ENCODE measurements at regions of chr11 and their contacts with region 1.

Region 1: GRCh38 chr11:6603287-6604080 is at the starts of genes ILK and RRP8:
- DNase-seq: peak; percentile 96
- H3K4me3 Mint-ChIP-seq: no peak within 1 kb of the TSS
- H3K27ac Mint-ChIP-seq: no peak within 1 kb of the TSS
- H3K4me1 Mint-ChIP-seq: peaks cover 28% of the 10 kb centered on the region
- H3K27me3 Mint-ChIP-seq: no peaks in the 10 kb centered on the region
- total RNA-seq, gene ILK: 89.6 and 92.4 TPM in 2 replicates
- total RNA-seq, gene RRP8: 41.5 and 43.8 TPM in 2 replicates

Region 2: GRCh38 chr11:6234387-6235107 is 368.9 kb before region 1 on chr11 and contains the start of gene FHIP1B:
- intact Hi-C with region 1: loop called (anchors 2 kb)
- DNase-seq: peak; percentile 100
- H3K4me3 Mint-ChIP-seq: peak within 1 kb of the TSS; percentile 95
- H3K27ac Mint-ChIP-seq: peak within 1 kb of the TSS; percentile 90
- H3K4me1 Mint-ChIP-seq: peaks cover 35% of the 10 kb centered on the region
- H3K27me3 Mint-ChIP-seq: peaks cover 1% of the 10 kb centered on the region
- total RNA-seq, gene FHIP1B: 19.3 and 20.2 TPM in 2 replicates

Region 3: GRCh38 chr11:6377902-6378639 is 225.4 kb before region 1 on chr11:
- intact Hi-C with region 1: loop called (anchors 1 kb)
- DNase-seq: peak; percentile 66
- H3K4me3 Mint-ChIP-seq: peak overlapping the region; percentile 2
- H3K27ac Mint-ChIP-seq: peak overlapping the region; percentile 10
- H3K4me1 Mint-ChIP-seq: peaks cover 29% of the 10 kb centered on the region
- H3K27me3 Mint-ChIP-seq: no peaks in the 10 kb centered on the region

Region 4: DNA sequence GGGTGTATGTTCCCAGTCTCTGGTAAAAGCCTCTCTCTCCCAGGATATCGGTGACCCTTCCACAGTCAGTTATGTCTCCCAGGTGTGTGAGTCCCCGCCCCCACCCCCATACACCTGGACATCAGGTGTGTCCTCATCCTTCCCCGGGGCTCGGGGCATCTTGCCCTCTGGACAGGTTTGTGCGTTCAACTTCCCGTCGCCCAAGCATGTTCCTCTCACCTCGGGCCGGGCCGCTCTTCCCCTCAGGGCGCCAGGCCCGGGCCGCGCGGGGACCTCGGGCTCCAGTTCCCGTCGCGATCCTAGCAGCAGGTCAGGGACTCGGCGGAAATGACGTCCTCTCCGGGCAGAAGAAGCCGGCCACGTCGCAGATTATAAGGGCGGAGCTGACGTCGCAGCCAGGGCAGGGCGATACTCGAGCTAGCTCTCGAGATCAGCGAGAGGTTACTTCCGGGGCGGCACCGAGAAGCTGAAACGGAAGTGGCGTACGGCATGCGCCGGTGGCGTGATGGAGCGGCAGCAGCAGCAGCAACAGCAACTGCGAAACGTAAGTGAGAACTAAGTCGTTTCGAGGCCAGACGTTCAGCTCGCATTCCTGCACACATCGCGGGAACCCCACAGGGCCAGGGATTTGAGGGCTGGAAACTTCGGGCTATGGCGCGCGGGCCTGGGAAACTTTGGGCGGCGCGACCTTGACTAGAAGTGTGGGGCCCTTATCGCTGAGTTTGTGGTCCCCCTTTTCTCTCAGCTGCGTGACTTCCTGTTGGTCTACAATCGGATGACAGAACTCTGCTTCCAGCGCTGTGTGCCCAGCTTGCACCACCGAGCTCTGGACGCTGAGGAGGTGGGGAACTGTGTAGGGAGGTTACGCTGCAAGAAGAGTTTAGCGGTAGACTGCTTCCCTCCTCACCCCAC is 122.2 kb before region 1 on chr11 and contains the starts of genes ARFIP2 and TIMM10B:
- intact Hi-C with region 1: loop called (anchors 1 kb)
- DNase-seq: peak; percentile 99
- H3K4me3 Mint-ChIP-seq: peak within 1 kb of the TSS; percentile 94
- H3K27ac Mint-ChIP-seq: peak within 1 kb of the TSS; percentile 98
- H3K4me1 Mint-ChIP-seq: peaks cover 30% of the 10 kb centered on the region
- H3K27me3 Mint-ChIP-seq: no peaks in the 10 kb centered on the region
- total RNA-seq, gene ARFIP2: 50.8 and 51.2 TPM in 2 replicates
- total RNA-seq, gene TIMM10B: 41.3 and 47.4 TPM in 2 replicates

Region 5: DNA sequence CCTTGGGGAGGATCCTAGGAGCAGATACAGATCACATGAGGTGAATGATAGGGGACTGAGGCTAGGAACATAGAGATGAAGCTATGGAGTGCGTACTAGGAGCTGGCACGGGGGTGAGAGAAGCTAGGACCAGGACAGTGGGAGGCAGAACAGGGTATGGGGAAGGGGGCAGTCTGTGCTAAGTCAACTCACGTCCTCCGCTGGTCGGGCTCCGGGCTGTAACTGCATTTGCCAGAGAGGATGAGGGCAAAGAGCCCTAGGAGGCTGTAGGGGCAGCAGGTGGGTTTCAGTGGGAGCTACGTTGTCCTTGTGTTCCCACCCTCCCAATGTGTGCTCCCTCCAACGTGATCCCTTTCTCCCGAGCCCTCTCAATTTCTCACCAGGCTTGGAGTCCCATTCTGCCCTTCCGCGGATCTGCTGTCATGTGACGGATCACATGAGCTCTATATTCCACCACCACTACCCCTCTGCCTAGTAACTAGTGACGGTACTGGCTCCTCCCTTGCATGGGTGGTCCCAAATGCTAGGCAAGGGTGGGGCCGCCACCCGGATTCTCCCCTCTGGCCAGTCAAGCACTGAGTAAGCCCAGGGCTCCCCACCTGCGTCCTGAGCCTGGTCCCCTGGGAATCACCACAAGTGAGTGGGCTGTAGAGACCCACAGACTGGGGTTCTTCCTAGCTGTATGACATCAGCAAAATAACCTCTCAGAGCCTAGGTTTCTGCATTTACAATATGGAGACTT is 15.7 kb after region 1 on chr11 and contains the start of gene TPP1:
- intact Hi-C with region 1: loop called (anchors 1 kb)
- DNase-seq: peak; percentile 98
- H3K4me3 Mint-ChIP-seq: no peak within 1 kb of the TSS
- H3K27ac Mint-ChIP-seq: no peak within 1 kb of the TSS
- H3K4me1 Mint-ChIP-seq: peaks cover 3% of the 10 kb centered on the region
- H3K27me3 Mint-ChIP-seq: no peaks in the 10 kb centered on the region
- total RNA-seq, gene TPP1: 32.2 and 35.2 TPM in 2 replicates

Region 6: DNA sequence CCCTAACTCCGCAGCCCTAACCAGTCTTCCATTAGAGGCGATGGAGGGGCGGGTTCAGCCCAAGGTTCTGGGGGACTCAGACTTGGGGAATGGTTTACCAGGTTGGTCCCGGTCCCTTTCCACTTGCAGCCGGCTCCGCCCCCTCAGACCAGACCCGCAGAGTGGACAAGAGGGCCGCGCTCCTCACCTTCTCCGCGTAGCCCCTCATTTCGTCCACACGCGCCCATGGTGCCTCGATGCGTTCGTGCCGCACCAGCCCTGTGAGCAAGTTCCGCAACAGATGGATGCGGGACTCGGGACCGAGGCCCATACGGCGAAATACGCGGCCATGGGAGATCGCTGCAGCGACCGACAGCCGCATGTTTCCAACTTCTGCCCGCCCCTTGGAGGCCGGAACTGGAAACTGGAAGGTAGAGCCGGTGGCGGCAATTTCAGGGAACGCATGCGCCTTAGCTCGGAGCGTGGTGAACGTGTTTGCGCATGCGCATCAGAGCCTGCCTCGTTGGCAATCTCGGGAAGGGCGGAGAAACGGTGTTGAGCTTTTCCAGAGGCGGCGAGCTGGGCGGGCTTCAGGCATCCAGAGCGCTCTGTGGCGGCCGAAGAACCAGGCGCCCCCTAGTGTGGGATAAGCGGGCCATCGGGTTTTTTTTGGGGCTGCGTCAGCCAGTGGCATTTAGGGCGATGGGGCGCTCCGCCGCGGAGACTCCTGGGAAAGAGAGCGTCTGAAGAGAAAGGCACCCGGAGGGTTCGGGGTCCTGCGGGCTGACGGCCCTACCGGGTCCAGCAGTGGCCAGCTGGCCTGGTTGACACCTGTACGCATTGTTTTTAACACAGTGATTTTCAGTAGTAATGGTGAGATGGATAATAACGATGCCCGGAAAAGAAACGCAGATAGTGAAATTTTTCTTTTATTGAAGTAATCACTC is 79.7 kb after region 1 on chr11 and contains the start of gene MRPL17:
- intact Hi-C with region 1: loop called (anchors 1 kb)
- DNase-seq: peak; percentile 100
- H3K4me3 Mint-ChIP-seq: peak within 1 kb of the TSS; percentile 86
- H3K27ac Mint-ChIP-seq: peak within 1 kb of the TSS; percentile 97
- H3K4me1 Mint-ChIP-seq: peaks cover 26% of the 10 kb centered on the region
- H3K27me3 Mint-ChIP-seq: peaks cover 2% of the 10 kb centered on the region
- total RNA-seq, gene MRPL17: 135 and 146 TPM in 2 replicates

Region 7: GRCh38 chr11:6746086-6746618 is 142.7 kb after region 1 on chr11:
- intact Hi-C with region 1: loop called (anchors 2 kb)
- DNase-seq: peak; percentile 87
- H3K4me3 Mint-ChIP-seq: no peak overlapping the region
- H3K27ac Mint-ChIP-seq: no peak overlapping the region
- H3K4me1 Mint-ChIP-seq: peaks cover 33% of the 10 kb centered on the region
- H3K27me3 Mint-ChIP-seq: no peaks in the 10 kb centered on the region